Left ventricle myocardium superior (tissue), 1 donor: ENCODE measurements at regions of chr20 and their contacts with region 1.

Region 1: DNA sequence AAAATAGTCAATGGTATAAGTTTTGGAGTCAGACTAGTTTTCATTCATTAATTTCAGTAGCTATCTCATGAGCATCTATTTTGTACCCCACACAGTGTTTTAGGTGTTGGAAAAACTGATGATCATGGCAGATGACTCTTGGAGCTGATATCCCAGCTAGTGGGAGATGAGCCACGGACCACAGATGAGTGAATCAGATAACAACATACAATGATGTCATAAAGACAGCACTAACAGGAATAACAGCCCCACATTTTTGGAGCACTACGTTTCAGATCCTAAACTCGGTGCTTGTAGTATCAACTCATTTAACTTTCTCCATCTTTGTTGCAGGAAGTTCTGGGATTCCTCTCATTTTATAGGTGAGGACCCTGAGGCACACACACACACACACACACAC is 67.8 kb upstream of the EDN3 start:
- DNase-seq: no peak
- ATAC-seq: no peak

Region 2: GRCh38 chr20:59403261-59403961 is 170.8 kb after region 1 on chr20:
- intact Hi-C with region 1: loop called (anchors 10 kb)
- DNase-seq: peak; percentile 66
- ATAC-seq: peak; percentile 62